ENCODE measurements at regions of chr6 and their contacts with region 1.

Region 1: DNA sequence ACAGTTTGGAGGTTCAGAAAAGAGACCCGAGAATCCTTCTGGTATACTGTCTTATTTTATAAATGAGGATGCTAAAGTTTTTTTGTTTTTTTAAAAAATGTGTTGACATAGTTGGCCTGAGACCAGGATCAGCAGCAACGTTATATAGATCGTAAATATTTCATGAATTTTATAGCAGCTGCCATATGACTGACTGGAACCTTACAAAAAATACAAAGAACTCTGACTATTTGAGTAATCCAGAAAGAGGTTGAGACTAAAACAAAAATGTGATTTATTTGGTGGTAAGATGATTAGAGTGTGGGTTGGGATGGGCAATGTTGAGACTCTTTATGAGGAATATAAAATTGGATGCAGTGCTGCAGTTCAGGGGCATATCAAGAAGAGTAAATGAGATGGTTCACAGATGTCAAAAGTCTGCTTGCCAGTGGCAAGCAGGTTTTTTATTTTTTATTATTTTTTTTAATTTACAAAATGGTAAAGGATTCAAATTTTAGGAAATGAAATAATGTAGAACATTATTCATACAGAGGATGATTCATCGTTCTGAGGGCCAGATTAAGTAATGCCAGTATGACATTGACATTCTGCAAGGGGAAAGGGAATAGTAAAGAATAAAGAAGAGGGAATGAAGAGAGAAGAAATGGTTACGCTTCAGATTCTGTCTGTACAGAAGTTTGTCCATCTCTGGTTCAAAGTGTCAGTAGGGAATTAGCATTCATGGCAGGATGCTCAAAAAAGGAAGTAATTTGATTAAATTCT is 58.5 kb downstream of the SCAF8 start:
- DNase-seq: no peak
- ATAC-seq: no peak
- H3K4me3 Mint-ChIP-seq: no peak overlapping the region
- H3K27ac Mint-ChIP-seq: peak overlapping the region; percentile 20
- H3K4me1 Mint-ChIP-seq: peaks cover 14% of the 10 kb centered on the region
- H3K27me3 Mint-ChIP-seq: no peaks in the 10 kb centered on the region
- CTCF ChIP-seq: no peak

Region 2: GRCh38 chr6:154805288-154805911 is 13.7 kb after region 1 on chr6:
- CTCF ChIA-PET with region 1: interaction called, 3 read pairs
- POLR2A ChIA-PET with region 1: no interaction called
- intact Hi-C with region 1: loop called (anchors 1 kb)
- DNase-seq: no peak
- ATAC-seq: peak; percentile 69
- H3K4me3 Mint-ChIP-seq: no peak overlapping the region
- H3K27ac Mint-ChIP-seq: no peak overlapping the region
- H3K4me1 Mint-ChIP-seq: peaks cover 6% of the 10 kb centered on the region
- H3K27me3 Mint-ChIP-seq: no peaks in the 10 kb centered on the region
- CTCF ChIP-seq: no peak